ENCODE measurements at regions of chr2 and their contacts with region 1.

Region 1: GRCh38 chr2:196337208-196337953 is 166.0 kb upstream of the STK17B start:
- DNase-seq: peak; percentile 70
- ATAC-seq: no peak
- H3K4me3 ChIP-seq: no peak overlapping the region
- H3K27ac ChIP-seq: no peak overlapping the region
- H3K4me1 ChIP-seq: peaks cover 33% of the 10 kb centered on the region
- H3K27me3 ChIP-seq: no peaks in the 10 kb centered on the region
- CTCF ChIP-seq: peak; percentile 42

Region 2: DNA sequence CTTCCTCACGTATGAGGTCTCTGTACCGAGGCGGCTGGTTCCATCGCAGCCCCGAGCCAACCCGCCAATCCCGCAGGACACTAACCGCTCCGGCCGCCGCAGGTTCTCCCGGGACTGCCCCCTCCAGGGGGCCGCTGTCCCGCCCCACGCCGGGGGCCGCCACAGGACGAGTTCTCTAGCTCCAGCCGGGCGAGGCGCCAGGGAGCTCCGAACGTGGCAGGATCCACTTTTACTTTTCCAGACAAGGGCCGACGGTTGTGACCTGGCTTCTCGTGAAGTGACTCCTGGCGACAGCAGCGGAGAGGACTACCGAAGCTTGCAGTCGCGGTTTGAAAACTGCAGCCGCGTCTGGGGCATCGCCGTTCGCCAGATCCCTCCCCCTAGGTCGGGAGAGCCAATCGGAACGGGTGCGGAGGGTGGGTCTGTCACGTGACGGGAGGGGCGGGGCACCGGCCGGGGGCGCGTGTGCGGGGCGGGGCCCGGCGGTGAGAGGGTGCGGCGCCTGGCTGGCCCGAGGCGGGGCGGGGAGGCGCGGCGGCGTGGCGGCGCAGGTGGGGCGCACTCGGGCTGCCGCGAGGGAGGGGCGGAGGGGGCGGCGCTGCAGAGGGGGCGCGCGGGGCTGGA is 166.0 kb before region 1 on chr2 and contains the start of gene STK17B:
- CTCF ChIA-PET with region 1: interaction called, 3 read pairs
- POLR2A ChIA-PET with region 1: no interaction called
- intact Hi-C with region 1: loop called (anchors 2 kb)
- DNase-seq: peak; percentile 96
- ATAC-seq: peak; percentile 73
- H3K4me3 ChIP-seq: peak within 1 kb of the TSS; percentile 96
- H3K27ac ChIP-seq: peak within 1 kb of the TSS; percentile 49
- H3K4me1 ChIP-seq: peaks cover 28% of the 10 kb centered on the region
- H3K27me3 ChIP-seq: no peaks in the 10 kb centered on the region
- CTCF ChIP-seq: no peak
- total RNA-seq, gene STK17B: 21.3 and 22.1 TPM in 2 replicates

Region 3: DNA sequence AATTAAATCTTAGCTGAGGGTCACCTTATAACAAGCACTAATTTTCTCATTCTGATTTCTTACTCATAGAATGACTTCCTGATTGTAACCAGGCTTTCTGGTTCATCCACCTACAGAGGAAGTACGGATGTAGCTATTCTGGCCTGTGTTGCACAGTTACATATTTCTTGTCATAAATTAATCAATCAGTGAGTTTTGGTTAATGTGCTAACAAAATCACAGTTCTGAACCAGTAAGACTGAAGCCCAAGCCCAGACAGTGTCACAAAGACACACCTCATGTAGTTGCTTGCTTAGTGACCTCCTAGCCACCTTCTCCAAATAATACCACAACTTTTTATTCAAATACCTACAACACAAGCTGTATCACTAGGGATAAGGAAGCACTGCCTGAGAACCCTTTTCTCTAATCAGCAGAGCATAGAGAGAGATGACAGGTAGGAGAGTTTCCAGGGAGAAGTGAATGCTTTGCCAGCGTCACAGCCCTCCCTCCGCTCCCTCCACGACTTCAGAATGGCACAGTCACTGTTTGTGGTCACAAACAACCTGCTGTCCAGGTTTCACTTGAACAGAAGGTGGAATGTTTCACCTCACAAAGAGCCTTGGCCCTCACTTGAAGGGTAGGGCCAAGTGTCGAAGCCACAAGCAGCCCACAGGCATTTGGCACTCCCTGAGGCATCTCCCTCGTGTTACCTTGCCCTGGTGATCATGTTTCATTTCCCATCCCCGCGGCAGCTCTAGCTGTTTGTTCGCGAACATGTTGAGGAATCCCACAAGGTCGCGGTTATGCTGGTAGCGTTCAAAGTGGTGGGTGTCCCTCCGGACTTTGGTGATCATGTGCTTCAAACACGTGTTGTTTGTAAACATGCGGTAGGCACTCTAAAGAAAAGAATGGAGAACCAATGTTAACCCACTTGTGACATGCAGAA is 45.2 kb before region 1 on chr2:
- CTCF ChIA-PET with region 1: no interaction called
- POLR2A ChIA-PET with region 1: no interaction called
- intact Hi-C with region 1: loop called (anchors 1 kb)
- DNase-seq: peak; percentile 99
- ATAC-seq: peak; percentile 66
- H3K4me3 ChIP-seq: peak overlapping the region; percentile 49
- H3K27ac ChIP-seq: peak overlapping the region; percentile 98
- H3K4me1 ChIP-seq: peaks cover 54% of the 10 kb centered on the region
- H3K27me3 ChIP-seq: no peaks in the 10 kb centered on the region
- CTCF ChIP-seq: no peak

Region 4: DNA sequence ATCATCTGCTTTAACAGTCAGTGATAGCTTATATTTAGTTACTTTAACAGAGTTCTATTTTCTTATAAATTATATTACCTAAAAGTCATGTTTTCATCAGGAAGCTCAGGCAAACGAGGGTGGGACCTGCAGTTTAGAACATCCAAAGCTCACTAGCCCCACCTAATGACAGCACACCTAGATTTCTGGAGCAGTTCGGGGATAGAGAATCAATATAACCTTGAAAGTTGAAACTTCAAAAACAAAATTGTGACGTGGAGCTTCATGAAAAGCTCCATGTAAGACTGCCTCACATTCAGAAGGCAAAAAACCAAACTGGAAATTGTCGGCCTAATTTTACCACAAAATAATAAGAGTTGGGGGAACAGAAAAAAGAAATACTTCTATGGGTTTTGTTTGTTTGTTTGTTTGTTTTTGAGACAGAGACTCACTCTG is 116.2 kb after region 1 on chr2:
- CTCF ChIA-PET with region 1: interaction called, 9 read pairs
- POLR2A ChIA-PET with region 1: no interaction called
- intact Hi-C with region 1: loop called (anchors 2 kb)
- DNase-seq: peak; percentile 72
- ATAC-seq: peak; percentile 89
- H3K4me3 ChIP-seq: no peak overlapping the region
- H3K27ac ChIP-seq: no peak overlapping the region
- H3K4me1 ChIP-seq: no peaks in the 10 kb centered on the region
- H3K27me3 ChIP-seq: peaks cover 11% of the 10 kb centered on the region
- CTCF ChIP-seq: peak; percentile 80

Region 5: GRCh38 chr2:196500684-196501431 is 163.5 kb after region 1 on chr2:
- CTCF ChIA-PET with region 1: no interaction called
- POLR2A ChIA-PET with region 1: no interaction called
- intact Hi-C with region 1: no loop called
- DNase-seq: peak; percentile 38
- ATAC-seq: no peak
- H3K4me3 ChIP-seq: no peak overlapping the region
- H3K27ac ChIP-seq: no peak overlapping the region
- H3K4me1 ChIP-seq: no peaks in the 10 kb centered on the region
- H3K27me3 ChIP-seq: no peaks in the 10 kb centered on the region
- CTCF ChIP-seq: no peak

Region 6: DNA sequence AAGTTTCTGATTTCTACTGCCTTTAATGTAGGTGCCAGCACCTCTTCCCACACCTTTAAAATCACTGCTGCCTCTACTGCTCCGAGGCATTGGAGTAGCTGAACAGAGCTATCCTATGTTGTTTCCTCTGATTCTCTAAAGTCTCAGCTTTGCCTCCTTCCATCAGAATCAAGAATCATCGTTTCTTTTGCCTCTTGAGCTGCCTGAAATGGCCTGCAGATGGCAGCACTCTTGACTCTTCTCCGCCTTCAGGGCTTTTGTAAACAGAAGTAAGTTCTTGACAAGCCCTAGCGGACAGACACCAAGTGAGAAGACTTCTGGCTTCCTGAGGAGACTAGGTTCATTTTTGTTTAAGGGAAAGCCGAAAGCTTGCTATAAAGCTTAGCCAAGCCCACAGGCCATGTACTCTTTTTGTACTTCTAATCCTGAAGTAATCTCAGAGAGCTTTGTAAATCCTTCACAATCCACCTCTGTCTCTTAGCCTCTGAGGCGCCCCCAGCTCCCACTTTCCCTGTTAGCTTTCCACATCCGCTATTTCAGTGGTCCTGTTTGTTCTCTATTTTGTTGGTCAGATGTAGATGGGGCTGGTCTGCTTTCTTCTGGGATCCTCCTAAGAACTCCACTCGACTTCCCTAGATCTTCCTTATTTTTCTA is 413.7 kb after region 1 on chr2:
- CTCF ChIA-PET with region 1: no interaction called
- POLR2A ChIA-PET with region 1: no interaction called
- intact Hi-C with region 1: loop called (anchors 10 kb)
- DNase-seq: peak; percentile 84
- ATAC-seq: peak; percentile 85
- H3K4me3 ChIP-seq: no peak overlapping the region
- H3K27ac ChIP-seq: no peak overlapping the region
- H3K4me1 ChIP-seq: no peaks in the 10 kb centered on the region
- H3K27me3 ChIP-seq: no peaks in the 10 kb centered on the region
- CTCF ChIP-seq: peak; percentile 92

Measured in PC-3 (cell line).